Naive thymus-derived CD4-positive, alpha-beta T cell (primary cell): ENCODE measurements at regions of chr1 and their contacts with region 1.

Region 1: GRCh38 chr1:12658531-12659453 is 14.9 kb downstream of the AADACL4 start:
- DNase-seq: peak; percentile 43 to 74 (median 58)
- ATAC-seq: peak; percentile 84
- H3K4me3 ChIP-seq: no peak overlapping the region
- H3K4me3 Mint-ChIP-seq: peak overlapping the region in 2 of 10 donors; percentile 35 to 54
- H3K27ac ChIP-seq: no peak overlapping the region
- H3K27ac Mint-ChIP-seq: peak overlapping the region in 2 of 9 donors; percentile 3 to 43
- H3K4me1 ChIP-seq: no peaks in the 10 kb centered on the region
- H3K4me1 Mint-ChIP-seq: peaks cover 0 to 10% (median 6%) of the 10 kb centered on the region in 7 donors
- H3K27me3 ChIP-seq: no peaks in the 10 kb centered on the region
- H3K27me3 Mint-ChIP-seq: peaks cover 0 to 11% (median 0%) of the 10 kb centered on the region in 5 donors

Region 2: GRCh38 chr1:12113433-12114339 is 545.1 kb before region 1 on chr1:
- CTCF ChIA-PET with region 1: no interaction called
- POLR2A ChIA-PET with region 1: no interaction called
- intact Hi-C with region 1: loop called (anchors 2 to 5 kb)
- DNase-seq: no peak
- ATAC-seq: no peak
- H3K4me3 ChIP-seq: no peak overlapping the region
- H3K4me3 Mint-ChIP-seq: peak overlapping the region in 1 of 10 donors; percentile 7
- H3K27ac ChIP-seq: no peak overlapping the region
- H3K27ac Mint-ChIP-seq: peak overlapping the region in 2 of 9 donors; percentile 30 to 78
- H3K4me1 ChIP-seq: no peaks in the 10 kb centered on the region
- H3K4me1 Mint-ChIP-seq: peaks cover 0 to 27% (median 4%) of the 10 kb centered on the region in 7 donors
- H3K27me3 ChIP-seq: no peaks in the 10 kb centered on the region
- H3K27me3 Mint-ChIP-seq: no peaks in the 10 kb centered on the region

Region 3: GRCh38 chr1:12229835-12230548 is 428.8 kb before region 1 on chr1 and contains the start of gene VPS13D:
- CTCF ChIA-PET with region 1: interaction called, 3 read pairs
- POLR2A ChIA-PET with region 1: no interaction called
- intact Hi-C with region 1: loop called in 1 of 2 experiments (anchors 2 kb)
- DNase-seq: peak; percentile 70 to 89 (median 84)
- ATAC-seq: peak; percentile 98
- H3K4me3 ChIP-seq: peak within 1 kb of the TSS; percentile 82
- H3K4me3 Mint-ChIP-seq: peak within 1 kb of the TSS; percentile 84 to 95 (median 90)
- H3K27ac ChIP-seq: peak within 1 kb of the TSS; percentile 92
- H3K27ac Mint-ChIP-seq: peak within 1 kb of the TSS; percentile 63 to 91 (median 85)
- H3K4me1 ChIP-seq: peaks cover 19 to 21% of the 10 kb centered on the region in 2 donors
- H3K4me1 Mint-ChIP-seq: peaks cover 4 to 38% (median 27%) of the 10 kb centered on the region in 7 donors
- H3K27me3 ChIP-seq: no peaks in the 10 kb centered on the region
- H3K27me3 Mint-ChIP-seq: peaks cover 0 to 6% (median 0%) of the 10 kb centered on the region in 5 donors
- total RNA-seq, gene VPS13D: 43.8 to 94.4 (median 77.3) TPM

Region 4: GRCh38 chr1:12275369-12275768 is 383.4 kb before region 1 on chr1:
- CTCF ChIA-PET with region 1: interaction called, 18 read pairs
- POLR2A ChIA-PET with region 1: no interaction called
- intact Hi-C with region 1: loop called (anchors 1 kb)
- DNase-seq: peak in 6 of 9 donors; percentile 15 to 43 (median 19)
- ATAC-seq: no peak
- H3K4me3 ChIP-seq: no peak overlapping the region
- H3K4me3 Mint-ChIP-seq: no peak overlapping the region
- H3K27ac ChIP-seq: no peak overlapping the region
- H3K27ac Mint-ChIP-seq: peak overlapping the region in 1 of 9 donors; percentile 45
- H3K4me1 ChIP-seq: no peaks in the 10 kb centered on the region
- H3K4me1 Mint-ChIP-seq: peaks cover 0 to 5% (median 0%) of the 10 kb centered on the region in 7 donors
- H3K27me3 ChIP-seq: no peaks in the 10 kb centered on the region
- H3K27me3 Mint-ChIP-seq: no peaks in the 10 kb centered on the region

Region 5: DNA sequence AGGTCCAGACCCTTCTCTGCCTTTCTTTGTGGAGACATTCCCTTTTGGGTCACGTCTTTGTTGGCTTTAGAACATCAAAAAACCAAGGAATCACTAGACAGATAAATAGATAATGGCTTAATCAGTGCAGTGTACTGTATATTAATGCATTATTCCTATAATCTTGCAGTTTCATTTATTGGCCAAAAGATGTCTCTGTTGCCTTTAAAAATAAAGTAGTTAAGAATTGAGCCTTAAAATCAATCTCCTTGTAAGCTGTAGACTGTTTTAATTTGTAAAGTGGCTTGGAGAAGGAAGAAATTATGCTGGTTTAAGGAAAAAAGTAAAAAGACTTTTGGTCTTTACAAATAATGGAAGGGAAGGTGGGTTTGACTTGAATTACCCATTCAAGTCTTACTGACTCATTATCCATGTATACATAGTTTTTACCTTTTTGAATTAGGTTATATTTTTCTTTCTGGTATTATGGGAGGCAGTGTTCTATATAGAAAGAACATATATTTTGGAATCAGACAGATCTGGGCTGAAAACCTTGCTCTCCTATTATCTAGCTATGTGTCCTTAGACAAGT is 344.4 kb before region 1 on chr1:
- CTCF ChIA-PET with region 1: interaction called, 65 read pairs
- POLR2A ChIA-PET with region 1: no interaction called
- intact Hi-C with region 1: loop called (anchors 1 kb)
- DNase-seq: peak in 5 of 9 donors; percentile 8 to 41 (median 17)
- ATAC-seq: no peak
- H3K4me3 ChIP-seq: no peak overlapping the region
- H3K4me3 Mint-ChIP-seq: no peak overlapping the region
- H3K27ac ChIP-seq: no peak overlapping the region
- H3K27ac Mint-ChIP-seq: no peak overlapping the region
- H3K4me1 ChIP-seq: no peaks in the 10 kb centered on the region
- H3K4me1 Mint-ChIP-seq: peaks cover 0 to 5% (median 0%) of the 10 kb centered on the region in 7 donors
- H3K27me3 ChIP-seq: no peaks in the 10 kb centered on the region
- H3K27me3 Mint-ChIP-seq: no peaks in the 10 kb centered on the region

Region 6: GRCh38 chr1:12448746-12449177 is 210.0 kb before region 1 on chr1:
- CTCF ChIA-PET with region 1: no interaction called
- POLR2A ChIA-PET with region 1: no interaction called
- intact Hi-C with region 1: no loop called
- DNase-seq: no peak
- ATAC-seq: no peak
- H3K4me3 ChIP-seq: peak overlapping the region; percentile 9
- H3K4me3 Mint-ChIP-seq: peak overlapping the region; percentile 78 to 94 (median 86)
- H3K27ac ChIP-seq: peak overlapping the region; percentile 59
- H3K27ac Mint-ChIP-seq: peak overlapping the region; percentile 76 to 98 (median 94)
- H3K4me1 ChIP-seq: peaks cover 29 to 74% of the 10 kb centered on the region in 2 donors
- H3K4me1 Mint-ChIP-seq: peaks cover 44 to 98% (median 86%) of the 10 kb centered on the region in 7 donors
- H3K27me3 ChIP-seq: no peaks in the 10 kb centered on the region
- H3K27me3 Mint-ChIP-seq: peaks cover 0 to 31% (median 0%) of the 10 kb centered on the region in 5 donors

Region 7: DNA sequence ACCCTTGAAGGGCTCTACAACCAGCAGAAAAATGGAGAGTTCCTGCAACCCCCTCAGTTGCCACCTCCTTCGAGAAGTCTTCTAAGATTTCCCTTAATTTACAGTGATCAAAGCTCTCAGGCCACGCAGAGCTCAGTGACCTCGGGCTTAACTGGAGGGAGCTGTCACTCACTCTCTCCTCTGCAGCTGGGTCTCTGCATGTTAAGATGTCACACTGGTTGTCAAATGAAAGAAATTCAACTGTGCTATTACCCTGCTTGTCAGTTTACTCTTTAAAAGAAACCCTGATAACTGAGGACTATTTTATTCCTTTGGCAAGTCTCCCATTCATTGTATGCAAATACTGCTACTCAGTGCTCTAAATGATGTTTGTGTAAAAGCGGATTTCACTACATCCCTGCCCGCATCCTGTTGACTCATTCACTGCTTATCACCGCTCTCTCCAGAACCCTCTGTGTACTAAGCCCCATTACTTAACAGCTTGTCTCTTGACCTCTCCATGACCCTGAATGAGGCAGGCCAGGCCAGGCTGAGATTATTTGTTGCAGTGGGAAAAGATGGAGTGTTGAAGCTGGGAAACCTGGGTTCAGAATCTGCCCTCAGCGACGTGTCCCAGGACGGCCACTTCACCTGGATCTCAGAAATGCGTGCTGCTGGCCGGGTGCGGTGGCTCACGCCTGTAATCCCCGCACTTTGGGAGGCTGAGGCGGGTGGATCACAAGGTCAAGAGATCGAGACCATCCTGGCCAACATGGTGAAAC is 54.5 kb before region 1 on chr1:
- CTCF ChIA-PET with region 1: interaction called, 11 read pairs
- POLR2A ChIA-PET with region 1: no interaction called
- intact Hi-C with region 1: no loop called
- DNase-seq: peak in 8 of 9 donors; percentile 36 to 78 (median 68)
- ATAC-seq: peak; percentile 90
- H3K4me3 ChIP-seq: no peak overlapping the region
- H3K4me3 Mint-ChIP-seq: peak overlapping the region; percentile 25 to 75 (median 68)
- H3K27ac ChIP-seq: peak overlapping the region; percentile 41
- H3K27ac Mint-ChIP-seq: peak overlapping the region; percentile 78 to 97 (median 88)
- H3K4me1 ChIP-seq: peaks cover 27 to 50% of the 10 kb centered on the region in 2 donors
- H3K4me1 Mint-ChIP-seq: peaks cover 23 to 94% (median 82%) of the 10 kb centered on the region in 7 donors
- H3K27me3 ChIP-seq: no peaks in the 10 kb centered on the region
- H3K27me3 Mint-ChIP-seq: peaks cover 0 to 2% (median 0%) of the 10 kb centered on the region in 5 donors

Region 8: GRCh38 chr1:12669529-12670068 is 10.8 kb after region 1 on chr1:
- CTCF ChIA-PET with region 1: interaction called, 11 read pairs
- POLR2A ChIA-PET with region 1: no interaction called
- intact Hi-C with region 1: no loop called
- DNase-seq: no peak
- ATAC-seq: no peak
- H3K4me3 ChIP-seq: no peak overlapping the region
- H3K4me3 Mint-ChIP-seq: no peak overlapping the region
- H3K27ac ChIP-seq: no peak overlapping the region
- H3K27ac Mint-ChIP-seq: no peak overlapping the region
- H3K4me1 ChIP-seq: no peaks in the 10 kb centered on the region
- H3K4me1 Mint-ChIP-seq: no peaks in the 10 kb centered on the region
- H3K27me3 ChIP-seq: no peaks in the 10 kb centered on the region
- H3K27me3 Mint-ChIP-seq: peaks cover 0 to 29% (median 18%) of the 10 kb centered on the region in 5 donors